Right ventricle myocardium inferior (tissue), 1 donor: ENCODE measurements at regions of chr5 and their contacts with region 1.

Region 1: DNA sequence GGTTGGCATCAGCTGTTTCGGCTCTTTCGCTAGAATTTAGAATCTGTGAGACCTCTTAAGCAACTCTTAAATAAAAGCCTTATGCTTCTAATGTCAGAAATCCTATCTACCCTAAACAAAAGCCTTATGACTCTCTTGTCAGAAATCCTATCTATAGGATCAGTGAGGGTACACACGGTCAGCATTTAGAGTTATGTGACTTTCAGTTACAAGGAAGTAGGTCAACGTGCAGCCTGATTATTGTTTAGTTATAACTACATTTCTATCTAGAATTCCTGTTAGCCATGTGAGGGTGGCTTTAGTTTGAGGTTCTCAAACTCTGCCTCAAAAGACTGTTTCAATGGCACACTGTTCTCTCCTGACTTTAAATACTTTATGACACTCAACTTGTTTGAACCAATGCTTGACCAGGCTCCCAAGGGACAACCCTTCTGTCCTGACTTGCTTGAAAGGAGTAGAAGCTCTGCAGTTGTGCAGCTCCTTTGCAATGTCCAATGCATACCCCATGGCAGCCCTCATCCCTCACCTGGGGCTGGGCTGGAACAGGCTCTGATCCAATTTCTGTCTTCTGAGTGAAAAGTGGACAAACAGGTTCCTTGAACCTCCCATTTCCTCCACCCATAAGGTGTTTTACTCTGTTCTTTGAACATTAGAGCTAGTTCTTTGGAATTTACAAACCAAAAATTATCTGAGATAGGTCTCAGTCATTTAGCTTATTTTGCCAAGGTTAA is 251.6 kb upstream of the PIK3R1 start:
- DNase-seq: peak; percentile 11
- ATAC-seq: no peak

Region 2: DNA sequence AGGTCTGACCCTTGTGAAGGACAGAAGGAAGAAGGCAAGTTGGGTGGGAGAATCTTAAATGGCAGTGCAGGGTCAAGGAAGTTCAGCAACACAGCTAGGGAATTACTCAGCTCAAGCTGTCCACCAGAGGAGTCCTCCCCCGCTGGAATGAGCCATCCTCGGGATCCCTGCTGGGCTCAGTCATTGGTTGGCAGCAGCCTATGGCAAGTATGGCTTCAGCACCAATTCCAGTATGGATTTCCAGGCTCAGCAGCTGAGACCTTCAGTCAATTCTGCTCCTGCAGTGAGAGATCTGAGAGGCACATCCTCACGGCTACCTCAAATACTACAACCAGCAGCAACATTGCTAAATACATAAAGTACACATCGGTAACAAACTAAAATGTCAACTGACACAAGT is 29.0 kb before region 1 on chr5:
- intact Hi-C with region 1: no loop called
- DNase-seq: no peak
- ATAC-seq: no peak

Region 3: GRCh38 chr5:68070591-68071281 is 106.8 kb after region 1 on chr5:
- intact Hi-C with region 1: loop called (anchors 10 kb)
- DNase-seq: no peak
- ATAC-seq: peak; percentile 35